ENCODE measurements at regions of chr5 and their contacts with region 1.

Region 1: DNA sequence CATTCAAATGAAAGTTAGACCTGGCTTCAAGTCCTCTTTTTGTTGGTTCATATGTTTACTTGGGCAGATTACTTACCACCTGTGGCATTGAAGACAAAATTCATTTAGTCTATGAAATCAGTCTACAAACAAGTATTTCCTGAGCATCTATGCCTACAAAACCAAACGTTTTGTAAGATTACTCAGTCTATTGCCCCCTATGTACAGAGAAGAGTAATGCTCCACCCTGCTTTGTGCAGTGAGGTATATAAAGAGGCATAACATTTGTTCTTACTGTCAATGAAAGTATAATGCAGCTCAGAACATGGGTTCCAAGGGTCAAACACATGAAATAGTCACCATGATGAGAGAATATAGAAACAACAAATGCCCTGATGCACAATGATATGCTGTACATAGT is 580.7 kb downstream of the KIF4B start:
- DNase-seq: no peak
- ATAC-seq: no peak
- H3K4me3 ChIP-seq: no peak overlapping the region
- H3K27ac ChIP-seq: no peak overlapping the region
- H3K4me1 ChIP-seq: no peaks in the 10 kb centered on the region
- H3K27me3 ChIP-seq: peaks cover 0 to 3% (median 0%) of the 10 kb centered on the region in 7 donors
- CTCF ChIP-seq: no peak

Region 2: DNA sequence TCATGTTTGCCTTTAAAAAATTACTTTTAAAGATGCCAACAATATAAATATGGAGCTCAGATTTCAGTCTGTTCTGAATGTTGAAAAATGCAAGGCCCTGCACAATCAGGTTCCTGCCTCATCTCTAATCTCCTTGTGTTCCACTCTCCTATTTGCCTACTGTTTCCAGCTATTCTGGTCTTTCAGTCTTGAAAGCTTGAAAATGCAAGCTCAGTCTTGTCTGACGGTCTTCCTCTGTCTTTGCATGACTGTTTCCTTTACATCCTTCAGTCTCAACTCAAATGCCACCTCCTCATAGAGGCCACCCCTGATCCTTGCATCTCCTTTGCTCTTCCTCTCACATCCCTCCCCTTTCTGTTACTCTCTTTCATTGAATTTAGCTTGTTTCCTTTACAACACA is 225.8 kb before region 1 on chr5:
- intact Hi-C with region 1: loop called in 1 of 10 experiments (anchors 5 kb)
- DNase-seq: no peak
- ATAC-seq: no peak
- H3K4me3 ChIP-seq: no peak overlapping the region
- H3K27ac ChIP-seq: no peak overlapping the region
- H3K4me1 ChIP-seq: no peaks in the 10 kb centered on the region
- H3K27me3 ChIP-seq: no peaks in the 10 kb centered on the region
- CTCF ChIP-seq: no peak

Region 3: GRCh38 chr5:155575861-155576260 is 18.4 kb before region 1 on chr5:
- intact Hi-C with region 1: loop called in 1 of 10 experiments (anchors 1 kb)
- DNase-seq: no peak
- ATAC-seq: no peak
- H3K4me3 ChIP-seq: no peak overlapping the region
- H3K27ac ChIP-seq: no peak overlapping the region
- H3K4me1 ChIP-seq: no peaks in the 10 kb centered on the region
- H3K27me3 ChIP-seq: no peaks in the 10 kb centered on the region
- CTCF ChIP-seq: no peak

Measured in heart right ventricle (tissue), 16 donors.